Activated CD8-positive, alpha-beta T cell treated with anti-CD3 and anti-CD28 coated beads for 36 hours (primary cell): ENCODE measurements at regions of chr12 and their contacts with region 1.

Region 1: GRCh38 chr12:6723607-6724396 is at the start of gene COPS7A:
- DNase-seq: peak; percentile 100
- ATAC-seq: peak; percentile 94
- H3K4me3 Mint-ChIP-seq: peak within 1 kb of the TSS; percentile 85
- H3K27ac Mint-ChIP-seq: peak within 1 kb of the TSS; percentile 97
- H3K4me1 Mint-ChIP-seq: peaks cover 24% of the 10 kb centered on the region
- H3K27me3 Mint-ChIP-seq: no peaks in the 10 kb centered on the region
- CTCF ChIP-seq: no peak
- total RNA-seq, gene COPS7A: 35.9 to 38.8 TPM

Region 2: GRCh38 chr12:6697584-6698351 is 26.0 kb before region 1 on chr12:
- CTCF ChIA-PET with region 1: interaction called, 10 read pairs
- POLR2A ChIA-PET with region 1: no interaction called
- intact Hi-C with region 1: no loop called
- DNase-seq: peak; percentile 44
- ATAC-seq: no peak
- H3K4me3 Mint-ChIP-seq: no peak overlapping the region
- H3K27ac Mint-ChIP-seq: no peak overlapping the region
- H3K4me1 Mint-ChIP-seq: peaks cover 13% of the 10 kb centered on the region
- H3K27me3 Mint-ChIP-seq: peaks cover 34% of the 10 kb centered on the region
- CTCF ChIP-seq: peak; percentile 35

Region 3: GRCh38 chr12:6708960-6709394 is 14.8 kb before region 1 on chr12:
- CTCF ChIA-PET with region 1: interaction called, 10 read pairs
- POLR2A ChIA-PET with region 1: interaction called, 7 read pairs
- intact Hi-C with region 1: no loop called
- DNase-seq: peak; percentile 59
- ATAC-seq: peak; percentile 65
- H3K4me3 Mint-ChIP-seq: peak overlapping the region; percentile 56
- H3K27ac Mint-ChIP-seq: peak overlapping the region; percentile 43
- H3K4me1 Mint-ChIP-seq: peaks cover 8% of the 10 kb centered on the region
- H3K27me3 Mint-ChIP-seq: peaks cover 10% of the 10 kb centered on the region
- CTCF ChIP-seq: no peak

Region 4: DNA sequence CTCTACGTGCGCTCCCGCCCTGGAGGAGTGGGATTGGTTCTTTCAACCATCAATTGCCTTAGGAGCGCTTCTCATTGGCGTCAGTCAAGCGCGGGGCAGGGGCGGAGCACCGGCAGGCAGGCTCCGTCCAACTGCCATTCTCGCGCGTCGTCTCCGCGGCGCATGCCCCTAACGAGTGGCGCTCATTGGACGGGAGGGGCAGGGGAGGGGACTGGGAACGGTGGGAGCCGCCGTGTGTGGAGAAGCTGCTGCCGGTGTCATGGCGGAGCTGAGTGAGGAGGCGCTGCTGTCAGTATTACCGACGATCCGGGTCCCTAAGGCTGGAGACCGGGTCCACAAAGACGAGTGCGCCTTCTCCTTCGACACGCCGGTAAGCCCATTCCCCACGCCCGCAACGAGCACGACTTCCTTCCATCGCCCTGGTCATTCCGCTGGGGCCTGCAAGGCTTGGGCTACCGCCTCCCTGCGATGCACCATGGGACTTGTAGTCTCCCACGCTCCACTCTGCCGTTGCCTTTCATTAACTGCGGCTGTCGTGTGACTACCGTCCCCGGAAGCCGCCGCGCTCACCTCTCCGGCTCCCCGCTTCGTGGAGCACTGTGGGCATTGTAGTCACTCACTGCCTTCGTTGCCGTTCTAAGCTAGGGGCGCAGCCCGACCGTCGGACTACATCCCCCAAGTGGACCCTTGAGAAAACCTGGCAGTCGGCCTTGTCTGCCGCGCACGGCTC is 128.3 kb after region 1 on chr12 and contains the start of gene USP5:
- CTCF ChIA-PET with region 1: interaction called, 10 read pairs
- POLR2A ChIA-PET with region 1: interaction called, 9 read pairs
- intact Hi-C with region 1: no loop called
- DNase-seq: peak; percentile 99
- ATAC-seq: peak; percentile 79
- H3K4me3 Mint-ChIP-seq: peak within 1 kb of the TSS; percentile 86
- H3K27ac Mint-ChIP-seq: peak within 1 kb of the TSS; percentile 98
- H3K4me1 Mint-ChIP-seq: peaks cover 29% of the 10 kb centered on the region
- H3K27me3 Mint-ChIP-seq: no peaks in the 10 kb centered on the region
- CTCF ChIP-seq: no peak
- total RNA-seq, gene USP5: 109 to 112 TPM